Activated CD4-positive, alpha-beta memory T cell treated with anti-CD3 and anti-CD28 coated beads, Interleukin-2, amount 10 ng/mL, durations not matched to agents 7 days and 5 days (primary cell): ENCODE measurements at regions of chr2 and their contacts with region 1.

Region 1: GRCh38 chr2:134118279-134119116 is 135.4 kb upstream of the MGAT5 start:
- DNase-seq: peak; percentile 87
- H3K4me3 Mint-ChIP-seq: peak overlapping the region; percentile 84
- H3K27ac Mint-ChIP-seq: peak overlapping the region; percentile 92
- H3K4me1 Mint-ChIP-seq: peaks cover 37% of the 10 kb centered on the region
- H3K27me3 Mint-ChIP-seq: peaks cover 14% of the 10 kb centered on the region

Region 2: GRCh38 chr2:133886735-133887660 is 231.5 kb before region 1 on chr2:
- CTCF ChIA-PET with region 1: interaction called, 12 read pairs
- POLR2A ChIA-PET with region 1: no interaction called
- DNase-seq: peak; percentile 48
- H3K4me3 Mint-ChIP-seq: no peak overlapping the region
- H3K27ac Mint-ChIP-seq: no peak overlapping the region
- H3K4me1 Mint-ChIP-seq: no peaks in the 10 kb centered on the region
- H3K27me3 Mint-ChIP-seq: peaks cover 2% of the 10 kb centered on the region

Region 3: DNA sequence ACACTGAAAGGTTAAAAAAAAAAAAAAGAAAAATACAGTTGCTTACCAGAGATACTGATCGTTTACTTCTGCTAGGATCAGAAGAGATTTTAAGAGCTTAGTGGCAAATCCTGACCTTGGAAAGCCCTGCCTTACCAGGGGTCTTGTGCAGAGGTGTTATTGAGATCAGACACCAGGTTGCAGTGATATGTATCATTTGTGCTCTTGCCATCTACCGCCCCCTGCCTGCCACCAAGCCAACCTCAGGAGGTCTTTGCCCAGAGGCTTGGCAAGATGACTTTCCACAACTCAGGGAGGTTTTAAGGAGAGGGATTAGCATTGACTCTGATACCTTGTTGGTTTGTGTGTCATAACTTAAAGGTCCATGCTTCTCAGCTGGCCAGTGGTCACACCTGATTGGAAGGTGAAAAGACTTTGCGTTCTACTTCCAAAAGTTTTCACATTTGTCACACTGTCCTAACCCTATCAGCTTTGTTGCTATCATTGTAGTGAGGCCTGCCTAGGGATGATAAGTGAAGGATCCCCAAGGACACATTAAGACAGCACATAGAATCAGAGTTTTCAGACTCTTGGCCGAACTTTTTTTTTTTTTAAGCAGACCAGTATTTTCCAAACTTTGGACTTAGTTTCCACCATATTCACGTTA is 89.2 kb after region 1 on chr2:
- CTCF ChIA-PET with region 1: interaction called, 69 read pairs
- POLR2A ChIA-PET with region 1: interaction called, 20 read pairs
- DNase-seq: peak; percentile 63
- H3K4me3 Mint-ChIP-seq: no peak overlapping the region
- H3K27ac Mint-ChIP-seq: no peak overlapping the region
- H3K4me1 Mint-ChIP-seq: peaks cover 6% of the 10 kb centered on the region
- H3K27me3 Mint-ChIP-seq: no peaks in the 10 kb centered on the region

Region 4: GRCh38 chr2:134232868-134233727 is 114.6 kb after region 1 on chr2:
- CTCF ChIA-PET with region 1: interaction called, 10 read pairs
- POLR2A ChIA-PET with region 1: interaction called, 7 read pairs
- DNase-seq: peak; percentile 33
- H3K4me3 Mint-ChIP-seq: peak overlapping the region; percentile 27
- H3K27ac Mint-ChIP-seq: peak overlapping the region; percentile 91
- H3K4me1 Mint-ChIP-seq: peaks cover 75% of the 10 kb centered on the region
- H3K27me3 Mint-ChIP-seq: no peaks in the 10 kb centered on the region

Region 5: GRCh38 chr2:134245340-134245984 is 127.0 kb after region 1 on chr2:
- CTCF ChIA-PET with region 1: interaction called, 86 read pairs
- POLR2A ChIA-PET with region 1: interaction called, 7 read pairs
- DNase-seq: peak; percentile 76
- H3K4me3 Mint-ChIP-seq: no peak overlapping the region
- H3K27ac Mint-ChIP-seq: no peak overlapping the region
- H3K4me1 Mint-ChIP-seq: peaks cover 62% of the 10 kb centered on the region
- H3K27me3 Mint-ChIP-seq: peaks cover 32% of the 10 kb centered on the region

Region 6: DNA sequence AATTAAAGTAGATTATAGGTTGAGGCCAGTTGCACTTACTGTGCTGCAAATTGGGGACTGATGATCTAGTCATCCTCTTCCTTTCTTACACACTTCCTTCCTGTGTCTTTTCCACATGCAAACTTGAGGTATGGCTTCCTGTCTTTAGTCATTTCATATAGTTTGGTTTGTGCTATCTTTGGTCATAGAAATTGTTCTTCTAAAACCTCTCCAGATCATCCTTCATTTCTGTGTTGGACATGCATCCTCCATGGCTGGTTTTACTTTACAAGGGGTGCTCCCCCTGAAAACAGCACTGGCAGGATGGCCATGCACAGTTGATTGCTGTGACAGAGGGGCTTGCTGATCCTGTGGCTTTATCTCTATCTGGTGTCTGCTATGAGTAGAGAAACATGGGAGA is 171.9 kb after region 1 on chr2:
- CTCF ChIA-PET with region 1: interaction called, 11 read pairs
- POLR2A ChIA-PET with region 1: interaction called, 8 read pairs
- DNase-seq: peak; percentile 26
- H3K4me3 Mint-ChIP-seq: no peak overlapping the region
- H3K27ac Mint-ChIP-seq: no peak overlapping the region
- H3K4me1 Mint-ChIP-seq: peaks cover 19% of the 10 kb centered on the region
- H3K27me3 Mint-ChIP-seq: peaks cover 12% of the 10 kb centered on the region

Region 7: DNA sequence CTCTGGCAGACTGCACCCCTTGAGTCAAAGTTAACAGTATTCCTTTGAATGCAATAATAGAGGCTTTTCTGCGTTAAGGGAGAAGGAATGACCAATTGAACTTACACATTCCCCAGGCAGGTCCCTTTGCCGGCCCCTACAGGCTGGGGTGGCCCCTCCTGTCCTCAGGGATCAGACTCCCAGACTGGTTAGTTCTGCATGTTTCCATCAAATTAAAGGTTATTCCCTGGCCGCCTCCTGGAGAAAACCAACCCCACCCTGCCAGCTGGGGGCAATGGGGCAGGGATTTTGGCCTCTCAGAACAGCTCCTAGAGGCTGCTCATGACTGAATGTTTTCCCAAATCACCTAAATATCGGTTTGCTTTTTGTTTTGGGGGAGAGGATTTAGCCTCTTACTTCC is 335.0 kb after region 1 on chr2:
- CTCF ChIA-PET with region 1: interaction called, 44 read pairs
- POLR2A ChIA-PET with region 1: interaction called, 3 read pairs
- DNase-seq: no peak
- H3K4me3 Mint-ChIP-seq: no peak overlapping the region
- H3K27ac Mint-ChIP-seq: no peak overlapping the region
- H3K4me1 Mint-ChIP-seq: no peaks in the 10 kb centered on the region
- H3K27me3 Mint-ChIP-seq: no peaks in the 10 kb centered on the region